A673 (cell line): ENCODE measurements at regions of chr3 and their contacts with region 1.

Region 1: DNA sequence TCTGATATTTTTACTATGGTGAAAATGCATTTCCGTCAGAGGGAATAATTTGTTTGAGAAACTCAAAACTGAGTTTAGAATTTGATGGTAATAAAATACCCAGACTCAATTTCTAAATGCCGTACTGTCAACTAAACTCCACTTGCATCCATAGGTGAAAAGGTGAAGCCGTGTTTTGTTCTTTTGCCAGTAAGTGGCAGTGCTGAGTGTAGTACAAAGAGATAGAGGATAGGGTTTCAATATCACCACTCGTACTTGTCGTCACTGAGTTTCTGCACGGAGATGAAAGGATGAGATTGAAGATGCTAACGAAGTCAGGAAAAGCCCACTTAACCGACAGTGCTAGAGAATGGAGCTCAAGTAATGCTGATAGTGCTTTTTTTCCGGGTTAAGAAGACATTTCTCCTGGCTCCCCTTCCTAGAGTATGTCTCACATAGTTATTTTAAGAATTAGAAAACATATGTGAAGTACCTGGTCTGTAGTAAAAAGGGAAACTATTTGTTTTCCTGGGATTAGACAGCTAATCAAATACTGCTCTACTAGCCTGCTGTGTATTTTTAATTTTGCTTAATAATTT is 345.1 kb downstream of the IL5RA start:
- DNase-seq: peak; percentile 29
- H3K4me3 ChIP-seq: no peak overlapping the region
- H3K27ac ChIP-seq: no peak overlapping the region
- H3K4me1 ChIP-seq: no peaks in the 10 kb centered on the region
- H3K27me3 ChIP-seq: no peaks in the 10 kb centered on the region
- CTCF ChIP-seq: peak; percentile 34; the same call in 1 of the 2 replicates

Region 2: DNA sequence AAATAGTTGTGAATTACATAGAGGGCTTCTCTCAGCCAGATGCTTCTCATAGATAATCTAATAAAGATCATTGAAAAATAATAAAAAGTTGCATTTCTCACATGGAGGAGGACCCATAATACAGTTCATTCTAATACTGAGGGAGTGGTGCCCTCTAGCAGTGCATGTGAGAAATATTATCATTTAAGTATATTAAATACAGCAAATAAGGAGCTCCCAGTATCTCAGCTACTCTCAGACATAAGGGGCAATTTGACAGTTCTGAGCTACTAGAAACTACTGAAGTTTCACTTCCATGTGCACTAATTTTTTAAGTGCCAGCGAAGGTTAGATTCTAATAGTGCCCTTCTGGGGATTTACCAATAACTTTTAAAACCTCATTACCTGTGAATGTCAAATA is 156.8 kb after region 1 on chr3:
- CTCF ChIA-PET with region 1: interaction called, 4 read pairs
- POLR2A ChIA-PET with region 1: no interaction called
- intact Hi-C with region 1: loop called (anchors 5 kb)
- DNase-seq: peak; percentile 52
- H3K4me3 ChIP-seq: no peak overlapping the region
- H3K27ac ChIP-seq: no peak overlapping the region
- H3K4me1 ChIP-seq: no peaks in the 10 kb centered on the region
- H3K27me3 ChIP-seq: no peaks in the 10 kb centered on the region
- CTCF ChIP-seq: peak; percentile 60

Region 3: GRCh38 chr3:3027976-3028567 is 263.0 kb after region 1 on chr3:
- CTCF ChIA-PET with region 1: no interaction called
- POLR2A ChIA-PET with region 1: no interaction called
- intact Hi-C with region 1: loop called (anchors 10 kb)
- DNase-seq: no peak
- H3K4me3 ChIP-seq: no peak overlapping the region
- H3K27ac ChIP-seq: no peak overlapping the region
- H3K4me1 ChIP-seq: no peaks in the 10 kb centered on the region
- H3K27me3 ChIP-seq: no peaks in the 10 kb centered on the region
- CTCF ChIP-seq: no peak